ENCODE measurements at regions of chr1 and their contacts with region 1.

Region 1: GRCh38 chr1:178300352-178300699 is 196.4 kb downstream of the CLEC20A start:
- DNase-seq: no peak
- ATAC-seq: no peak; the same call in 1 of the 2 replicates
- H3K4me3 ChIP-seq: no peak overlapping the region
- H3K27ac ChIP-seq: no peak overlapping the region
- H3K4me1 ChIP-seq: peaks cover 14% of the 10 kb centered on the region
- H3K27me3 ChIP-seq: no peaks in the 10 kb centered on the region
- CTCF ChIP-seq: no peak

Region 2: GRCh38 chr1:178330848-178331497 is 30.6 kb after region 1 on chr1:
- CTCF ChIA-PET with region 1: no interaction called
- POLR2A ChIA-PET with region 1: no interaction called
- intact Hi-C with region 1: no loop called
- DNase-seq: no peak
- ATAC-seq: peak; percentile 82
- H3K4me3 ChIP-seq: no peak overlapping the region
- H3K27ac ChIP-seq: no peak overlapping the region
- H3K4me1 ChIP-seq: peaks cover 12% of the 10 kb centered on the region; the same call in 1 of the 2 replicates
- H3K27me3 ChIP-seq: no peaks in the 10 kb centered on the region
- CTCF ChIP-seq: no peak

Region 3: GRCh38 chr1:178344513-178345082 is 44.3 kb after region 1 on chr1:
- CTCF ChIA-PET with region 1: no interaction called
- POLR2A ChIA-PET with region 1: no interaction called
- intact Hi-C with region 1: loop called (anchors 5 kb)
- DNase-seq: peak; percentile 66
- ATAC-seq: peak; percentile 37
- H3K4me3 ChIP-seq: peak overlapping the region; percentile 28; the same call in 1 of the 2 replicates
- H3K27ac ChIP-seq: peak overlapping the region; percentile 27
- H3K4me1 ChIP-seq: peaks cover 36% of the 10 kb centered on the region
- H3K27me3 ChIP-seq: no peaks in the 10 kb centered on the region
- CTCF ChIP-seq: peak; percentile 70

Region 4: GRCh38 chr1:178354816-178355215 is 54.5 kb after region 1 on chr1:
- CTCF ChIA-PET with region 1: no interaction called
- POLR2A ChIA-PET with region 1: no interaction called
- intact Hi-C with region 1: no loop called
- DNase-seq: peak; percentile 4
- ATAC-seq: no peak
- H3K4me3 ChIP-seq: no peak overlapping the region
- H3K27ac ChIP-seq: no peak overlapping the region
- H3K4me1 ChIP-seq: no peaks in the 10 kb centered on the region
- H3K27me3 ChIP-seq: no peaks in the 10 kb centered on the region
- CTCF ChIP-seq: no peak

Region 5: DNA sequence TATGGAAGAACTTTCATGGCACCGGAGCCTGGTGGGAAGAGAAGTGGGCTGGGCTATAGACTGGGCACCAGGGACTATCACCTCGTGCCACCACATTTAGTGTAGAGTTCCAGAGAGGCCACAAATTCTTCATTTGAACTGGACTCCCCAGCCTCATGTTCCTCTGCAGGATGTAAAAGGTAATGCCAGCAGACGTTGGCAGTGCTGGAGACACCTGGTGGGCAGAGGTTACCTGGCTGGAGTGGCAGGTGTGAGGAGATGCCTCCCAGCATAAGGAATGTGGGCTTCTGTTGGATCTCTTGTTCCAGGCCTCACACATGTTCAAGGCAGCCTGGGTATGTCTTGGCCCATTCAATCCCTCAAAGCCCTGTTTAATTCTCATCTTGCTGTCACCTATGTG is 247.8 kb after region 1 on chr1:
- CTCF ChIA-PET with region 1: no interaction called
- POLR2A ChIA-PET with region 1: no interaction called
- intact Hi-C with region 1: no loop called
- DNase-seq: peak; percentile 24
- ATAC-seq: no peak
- H3K4me3 ChIP-seq: no peak overlapping the region
- H3K27ac ChIP-seq: no peak overlapping the region
- H3K4me1 ChIP-seq: peaks cover 15% of the 10 kb centered on the region; the same call in 1 of the 2 replicates
- H3K27me3 ChIP-seq: no peaks in the 10 kb centered on the region
- CTCF ChIP-seq: peak; percentile 25; the same call in 1 of the 2 replicates

Measured in PC-3 (cell line).